Naive thymus-derived CD4-positive, alpha-beta T cell (primary cell): ENCODE measurements at regions of chr16 and their contacts with region 1.

Region 1: DNA sequence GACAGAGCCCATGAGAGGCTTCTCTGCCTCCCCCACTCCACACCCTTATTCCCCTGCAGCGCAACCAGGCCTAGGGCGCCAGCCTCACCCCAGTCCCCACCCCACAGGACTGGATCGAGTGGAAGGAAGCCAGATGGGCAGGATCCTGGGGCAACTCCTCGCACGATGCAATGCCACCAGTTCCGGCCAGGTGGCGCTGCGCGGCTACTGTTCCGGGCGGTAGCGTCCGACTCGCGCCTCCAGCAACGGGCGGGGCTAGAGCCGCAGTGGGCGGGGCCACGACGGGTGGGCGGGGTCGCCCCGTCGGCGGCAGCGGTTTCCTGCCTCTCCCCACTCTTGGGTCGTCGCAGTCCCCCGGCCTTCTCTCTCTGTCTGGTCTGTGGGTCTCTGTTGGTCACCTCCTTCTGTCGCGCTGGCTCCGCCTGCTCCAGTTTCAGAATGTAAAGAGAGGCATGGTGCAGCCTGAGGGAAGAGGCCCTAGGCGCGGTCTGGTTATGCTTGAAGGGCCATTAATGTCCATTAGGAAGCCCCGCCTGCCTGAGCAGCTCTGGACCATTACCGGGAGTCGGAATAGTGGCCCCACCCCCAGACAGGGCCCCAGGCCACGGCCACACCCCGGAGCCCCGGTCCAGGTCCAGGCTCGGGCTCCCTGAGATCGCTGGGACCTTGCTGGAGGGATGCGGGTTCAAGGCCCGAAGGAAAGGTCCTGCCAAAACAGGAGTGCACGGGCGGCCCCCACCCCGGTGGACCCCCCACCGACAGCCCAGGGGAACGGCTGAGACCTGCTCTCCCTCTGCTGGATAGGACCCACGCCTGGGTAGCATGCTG is 3.4 kb upstream of the NHERF2 start:
- DNase-seq: peak; percentile 88 to 98 (median 93)
- ATAC-seq: peak; percentile 99
- H3K4me3 ChIP-seq: peak overlapping the region; percentile 34
- H3K4me3 Mint-ChIP-seq: peak overlapping the region; percentile 56 to 83 (median 76)
- H3K27ac ChIP-seq: peak overlapping the region; percentile 67
- H3K27ac Mint-ChIP-seq: peak overlapping the region; percentile 66 to 95 (median 79)
- H3K4me1 ChIP-seq: peaks cover 14 to 20% of the 10 kb centered on the region in 2 donors
- H3K4me1 Mint-ChIP-seq: peaks cover 13 to 30% (median 22%) of the 10 kb centered on the region in 7 donors
- H3K27me3 ChIP-seq: peaks cover 0 to 8% of the 10 kb centered on the region in 2 donors
- H3K27me3 Mint-ChIP-seq: peaks cover 7 to 58% (median 15%) of the 10 kb centered on the region in 5 donors

Region 2: GRCh38 chr16:1929578-1930337 is 93.6 kb before region 1 on chr16:
- CTCF ChIA-PET with region 1: no interaction called
- POLR2A ChIA-PET with region 1: no interaction called
- intact Hi-C with region 1: no loop called
- DNase-seq: peak; percentile 83 to 99 (median 91)
- ATAC-seq: peak; percentile 100
- H3K4me3 ChIP-seq: peak overlapping the region; percentile 48
- H3K4me3 Mint-ChIP-seq: peak overlapping the region in 6 of 10 donors; percentile 30 to 82 (median 74)
- H3K27ac ChIP-seq: peak overlapping the region; percentile 64
- H3K27ac Mint-ChIP-seq: no peak overlapping the region
- H3K4me1 ChIP-seq: no peaks in the 10 kb centered on the region
- H3K4me1 Mint-ChIP-seq: peaks cover 2 to 8% (median 4%) of the 10 kb centered on the region in 7 donors
- H3K27me3 ChIP-seq: no peaks in the 10 kb centered on the region
- H3K27me3 Mint-ChIP-seq: peaks cover 0 to 3% (median 2%) of the 10 kb centered on the region in 5 donors

Region 3: DNA sequence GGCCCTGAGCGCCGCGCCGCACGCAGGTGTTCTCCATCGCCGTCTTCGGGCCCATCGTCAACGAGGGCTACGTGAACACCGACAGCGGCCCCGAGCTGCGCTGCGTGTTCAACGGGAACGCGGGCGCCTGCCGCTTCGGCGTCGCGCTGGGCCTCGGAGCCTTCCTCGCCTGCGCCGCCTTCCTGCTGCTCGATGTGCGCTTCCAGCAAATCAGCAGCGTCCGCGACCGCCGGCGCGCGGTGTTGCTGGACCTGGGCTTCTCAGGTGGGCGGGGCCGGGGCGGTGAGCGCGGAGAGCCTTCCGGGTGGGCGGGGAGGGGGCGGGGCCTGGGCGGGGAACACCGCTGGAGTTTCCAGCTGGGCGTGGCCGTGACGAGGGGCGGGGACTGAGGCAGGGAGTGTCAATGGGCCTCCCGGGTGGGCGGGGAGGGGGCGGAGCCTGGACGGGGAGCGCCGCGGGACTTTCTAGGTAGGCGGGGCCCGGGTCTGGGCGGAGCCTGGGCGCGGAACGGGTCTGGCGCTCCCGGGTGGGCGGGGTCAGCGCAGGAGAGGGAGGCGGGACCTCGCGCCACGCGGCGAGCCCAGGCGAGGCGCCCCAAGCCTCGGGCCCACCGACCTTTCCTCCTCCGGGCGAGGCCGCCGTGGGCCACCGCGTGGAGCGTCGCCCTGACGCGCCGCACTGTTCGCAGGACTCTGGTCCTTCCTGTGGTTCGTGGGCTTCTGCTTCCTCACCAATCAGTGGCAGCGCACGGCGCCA is 31.2 kb before region 1 on chr16:
- CTCF ChIA-PET with region 1: no interaction called
- POLR2A ChIA-PET with region 1: no interaction called
- intact Hi-C with region 1: loop called in 1 of 2 experiments (anchors 1 kb)
- DNase-seq: peak; percentile 85 to 98 (median 92)
- ATAC-seq: peak; percentile 95
- H3K4me3 ChIP-seq: peak overlapping the region; percentile 39
- H3K4me3 Mint-ChIP-seq: peak overlapping the region in 9 of 10 donors; percentile 45 to 82 (median 75)
- H3K27ac ChIP-seq: peak overlapping the region; percentile 54
- H3K27ac Mint-ChIP-seq: peak overlapping the region in 7 of 9 donors; percentile 22 to 82 (median 62)
- H3K4me1 ChIP-seq: peaks cover 15 to 16% of the 10 kb centered on the region in 2 donors
- H3K4me1 Mint-ChIP-seq: peaks cover 5 to 33% (median 22%) of the 10 kb centered on the region in 7 donors
- H3K27me3 ChIP-seq: peaks cover 0 to 3% of the 10 kb centered on the region in 2 donors
- H3K27me3 Mint-ChIP-seq: peaks cover 8 to 14% (median 10%) of the 10 kb centered on the region in 5 donors

Region 4: DNA sequence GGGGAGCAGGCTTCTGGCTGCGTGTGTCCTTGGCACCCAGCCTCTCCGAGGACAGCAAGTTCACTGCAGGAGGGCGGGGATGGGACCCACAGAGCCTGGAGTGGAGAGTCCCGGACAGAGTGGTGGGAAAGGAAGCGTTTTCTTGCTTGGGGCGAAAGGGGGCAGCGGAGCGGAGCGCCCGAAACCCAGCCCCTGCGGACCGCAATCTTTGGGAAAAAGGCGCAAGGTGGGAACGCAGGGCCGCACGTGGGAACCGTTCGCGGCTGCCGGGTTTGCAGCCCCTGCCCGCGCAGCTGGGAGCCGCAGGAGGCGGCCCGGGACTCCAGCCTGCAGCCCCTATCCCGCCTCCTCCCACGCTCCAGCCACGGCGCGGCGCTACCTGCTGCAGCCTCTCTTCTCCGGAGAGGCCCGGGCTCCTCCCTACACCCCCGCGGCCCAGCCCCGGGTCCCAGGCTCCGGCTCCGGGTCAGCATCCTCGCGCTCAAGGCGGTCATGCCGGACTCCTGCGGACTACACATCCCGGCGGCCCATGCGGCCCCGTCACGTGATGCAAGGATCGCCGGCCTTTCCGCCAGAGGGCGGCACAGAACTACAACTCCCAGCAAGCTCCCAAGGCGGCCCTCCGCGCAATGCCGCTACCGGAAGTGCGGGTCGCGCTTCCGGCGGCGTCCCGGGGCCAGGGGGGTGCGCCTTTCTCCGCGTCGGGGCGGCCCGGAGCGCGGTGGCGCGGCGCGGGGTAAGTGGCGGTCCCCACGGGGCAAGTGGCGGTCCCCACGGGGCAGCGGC is 24.2 kb after region 1 on chr16 and contains the starts of genes NTHL1 and TSC2:
- CTCF ChIA-PET with region 1: interaction called, 6 read pairs
- POLR2A ChIA-PET with region 1: interaction called, 6 read pairs
- intact Hi-C with region 1: loop called (anchors 1 kb)
- DNase-seq: peak; percentile 81 to 95 (median 87)
- ATAC-seq: peak; percentile 98
- H3K4me3 ChIP-seq: peak within 1 kb of the TSS; percentile 72
- H3K4me3 Mint-ChIP-seq: peak within 1 kb of the TSS; percentile 82 to 97 (median 93)
- H3K27ac ChIP-seq: peak within 1 kb of the TSS; percentile 82
- H3K27ac Mint-ChIP-seq: peak within 1 kb of the TSS in 8 of 9 donors; percentile 57 to 91 (median 82)
- H3K4me1 ChIP-seq: peaks cover 6 to 12% of the 10 kb centered on the region in 2 donors
- H3K4me1 Mint-ChIP-seq: peaks cover 16 to 23% (median 19%) of the 10 kb centered on the region in 7 donors
- H3K27me3 ChIP-seq: no peaks in the 10 kb centered on the region
- H3K27me3 Mint-ChIP-seq: no peaks in the 10 kb centered on the region
- total RNA-seq, gene NTHL1: 4.4 to 27.0 (median 7.5) TPM
- total RNA-seq, gene TSC2: 126 to 155 (median 147) TPM

Region 5: DNA sequence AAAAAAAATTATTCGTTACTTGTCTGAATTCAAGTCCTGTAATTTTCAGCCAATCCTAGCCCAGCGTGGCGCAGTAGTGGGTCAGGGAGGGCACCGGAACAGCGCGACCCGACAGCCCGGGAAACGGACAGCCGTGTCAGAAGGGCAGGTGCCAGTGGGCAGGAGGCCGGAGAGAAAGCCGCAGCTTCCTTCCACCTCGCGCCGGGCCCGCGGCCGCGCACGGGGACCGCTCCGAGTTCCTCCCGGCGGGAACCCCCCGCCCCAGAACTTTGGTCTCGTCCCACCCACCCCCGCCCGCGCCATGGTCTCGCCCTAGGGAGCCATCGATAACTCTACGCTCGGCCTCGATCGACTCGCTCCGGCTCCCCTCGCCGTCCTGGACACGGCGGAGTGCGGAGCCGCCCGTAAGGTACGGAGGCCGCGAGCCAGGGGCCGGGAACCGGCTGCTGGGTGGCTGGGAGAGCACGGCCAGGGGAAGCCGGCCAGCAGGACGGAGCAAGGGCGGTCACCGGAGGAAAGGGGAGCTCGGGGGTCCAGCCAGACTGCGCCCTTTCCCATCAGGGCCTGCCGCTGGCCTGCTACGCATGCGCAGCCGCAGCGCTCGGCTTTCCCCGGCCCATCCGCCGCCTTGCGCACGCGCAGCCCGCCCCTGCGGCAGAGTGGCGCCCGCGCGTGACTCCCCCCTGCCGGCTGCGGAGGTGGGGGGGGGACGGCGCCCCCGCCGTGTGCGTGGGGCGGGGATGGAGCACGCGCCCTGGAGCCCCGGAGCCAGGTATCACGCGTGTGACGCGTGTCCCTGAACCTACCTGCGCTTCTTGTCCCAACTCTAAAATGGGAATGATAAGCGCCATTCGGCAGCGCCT is 182.0 kb after region 1 on chr16 and contains the start of gene MLST8:
- CTCF ChIA-PET with region 1: no interaction called
- POLR2A ChIA-PET with region 1: no interaction called
- intact Hi-C with region 1: loop called in 1 of 2 experiments (anchors 1 kb)
- DNase-seq: peak; percentile 88 to 100 (median 98)
- ATAC-seq: peak; percentile 97
- H3K4me3 ChIP-seq: peak within 1 kb of the TSS; percentile 93
- H3K4me3 Mint-ChIP-seq: peak within 1 kb of the TSS; percentile 80 to 95 (median 88)
- H3K27ac ChIP-seq: peak within 1 kb of the TSS; percentile 97
- H3K27ac Mint-ChIP-seq: peak within 1 kb of the TSS; percentile 70 to 91 (median 86)
- H3K4me1 ChIP-seq: peaks cover 11 to 13% of the 10 kb centered on the region in 2 donors
- H3K4me1 Mint-ChIP-seq: peaks cover 7 to 29% (median 21%) of the 10 kb centered on the region in 7 donors
- H3K27me3 ChIP-seq: no peaks in the 10 kb centered on the region
- H3K27me3 Mint-ChIP-seq: peaks cover 0 to 11% (median 0%) of the 10 kb centered on the region in 5 donors
- total RNA-seq, gene MLST8: 25.1 to 41.2 (median 35.5) TPM

Region 6: GRCh38 chr16:2500918-2501750 is 477.8 kb after region 1 on chr16:
- CTCF ChIA-PET with region 1: no interaction called
- POLR2A ChIA-PET with region 1: no interaction called
- intact Hi-C with region 1: loop called in 1 of 2 experiments (anchors 1 kb)
- DNase-seq: peak; percentile 64 to 85 (median 74)
- ATAC-seq: peak; percentile 97
- H3K4me3 ChIP-seq: no peak overlapping the region
- H3K4me3 Mint-ChIP-seq: no peak overlapping the region
- H3K27ac ChIP-seq: no peak overlapping the region
- H3K27ac Mint-ChIP-seq: no peak overlapping the region
- H3K4me1 ChIP-seq: no peaks in the 10 kb centered on the region
- H3K4me1 Mint-ChIP-seq: peaks cover 0 to 3% (median 0%) of the 10 kb centered on the region in 7 donors
- H3K27me3 ChIP-seq: no peaks in the 10 kb centered on the region
- H3K27me3 Mint-ChIP-seq: no peaks in the 10 kb centered on the region